Right lobe of liver (tissue), 6 donors: ENCODE measurements at regions of chr3 and their contacts with region 1.

Region 1: DNA sequence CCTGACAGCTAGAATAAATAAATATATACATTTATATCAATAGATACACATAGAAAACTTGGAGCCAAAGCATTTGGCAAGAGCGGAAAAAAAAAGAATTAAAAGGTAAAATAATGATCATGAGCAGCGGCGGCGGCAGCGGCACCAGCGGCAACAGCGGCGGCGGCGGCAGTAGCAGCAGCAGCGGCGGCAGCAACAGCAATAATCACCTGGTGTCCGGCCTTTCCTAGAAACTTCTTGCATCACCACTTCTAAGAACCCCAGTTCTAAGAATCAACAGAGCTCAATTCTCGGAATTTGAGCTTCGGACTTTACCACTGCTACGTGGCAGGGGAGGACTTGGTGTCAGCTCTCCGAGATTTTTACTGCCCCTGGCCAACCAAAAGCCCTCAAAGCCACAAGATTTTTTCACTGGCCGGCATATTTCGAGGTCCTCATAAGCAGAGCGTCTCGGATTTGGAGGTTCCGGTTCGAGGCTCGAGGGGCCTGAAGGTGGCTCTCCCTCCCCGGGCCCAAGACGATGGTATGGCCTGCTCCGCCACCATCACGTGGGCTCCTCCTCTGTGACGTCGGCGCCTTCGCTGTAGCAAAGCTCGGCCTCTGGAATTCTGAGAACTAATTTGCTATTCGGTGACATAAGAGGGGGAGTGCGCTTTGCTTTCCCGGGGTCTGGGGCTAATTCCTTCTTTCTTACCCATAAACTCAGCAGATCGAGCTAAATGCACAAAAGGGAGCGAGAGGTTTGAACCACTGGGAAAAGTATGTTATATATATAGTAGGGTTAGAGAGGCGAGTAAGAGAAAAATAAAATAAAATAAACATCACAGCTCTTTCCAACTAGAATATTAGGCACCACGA is at the start of gene BCL6:
- DNase-seq: peak; percentile 93 to 94 (median 94)
- ATAC-seq: peak; percentile 52 to 73 (median 67)
- H3K4me3 ChIP-seq: peak within 1 kb of the TSS; percentile 67 to 73 (median 67)
- H3K27ac ChIP-seq: peak within 1 kb of the TSS; percentile 99 to 100 (median 99)
- H3K4me1 ChIP-seq: peaks cover 0 to 35% (median 9%) of the 10 kb centered on the region in 4 donors
- H3K27me3 ChIP-seq: no peaks in the 10 kb centered on the region
- CTCF ChIP-seq: peak in 1 of 4 donors; percentile 13
- POLR2A ChIP-seq: peak; percentile 97
- total RNA-seq, gene BCL6: 29.1 to 67.5 (median 41.8) TPM

Region 2: DNA sequence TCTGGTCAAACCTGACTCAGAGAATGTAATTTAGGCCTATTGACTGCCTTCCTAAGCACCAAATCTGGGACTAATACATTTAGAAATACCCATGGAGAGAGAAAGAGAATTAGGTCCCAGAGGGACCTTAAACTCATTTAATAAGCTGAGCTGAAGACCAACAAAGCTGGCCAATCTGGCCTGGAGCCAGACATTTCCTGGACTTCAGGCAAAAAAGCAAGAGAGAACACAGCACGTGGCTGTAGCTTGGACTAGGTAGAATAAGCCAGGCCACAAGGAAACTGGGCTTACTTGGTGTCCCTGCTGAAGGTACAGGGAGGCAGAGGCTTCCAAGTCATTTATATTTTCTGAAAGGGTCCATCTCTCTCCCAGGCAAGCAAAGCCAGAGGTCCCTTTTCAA is 289.2 kb before region 1 on chr3:
- intact Hi-C with region 1: no loop called
- DNase-seq: peak in 1 of 3 donors; percentile 17
- ATAC-seq: no peak
- H3K4me3 ChIP-seq: no peak overlapping the region
- H3K27ac ChIP-seq: no peak overlapping the region
- H3K4me1 ChIP-seq: no peaks in the 10 kb centered on the region
- H3K27me3 ChIP-seq: no peaks in the 10 kb centered on the region
- CTCF ChIP-seq: no peak
- POLR2A ChIP-seq: no peak

Region 3: GRCh38 chr3:187935623-187936156 is 190.3 kb after region 1 on chr3:
- intact Hi-C with region 1: no loop called
- DNase-seq: no peak
- ATAC-seq: peak; percentile 39 to 69 (median 48)
- H3K4me3 ChIP-seq: no peak overlapping the region
- H3K27ac ChIP-seq: no peak overlapping the region
- H3K4me1 ChIP-seq: peaks cover 0 to 13% (median under 1%) of the 10 kb centered on the region in 4 donors
- H3K27me3 ChIP-seq: no peaks in the 10 kb centered on the region
- CTCF ChIP-seq: no peak
- POLR2A ChIP-seq: no peak

Region 4: GRCh38 chr3:188947401-188948280 is 1202.2 kb after region 1 on chr3:
- intact Hi-C with region 1: loop called in 1 of 2 experiments (anchors 10 kb)
- DNase-seq: peak; percentile 89 to 98 (median 93)
- ATAC-seq: peak; percentile 72 to 90 (median 78)
- H3K4me3 ChIP-seq: peak overlapping the region; percentile 64 to 75 (median 65)
- H3K27ac ChIP-seq: peak overlapping the region; percentile 78 to 98 (median 97)
- H3K4me1 ChIP-seq: peaks cover 0 to 49% (median 11%) of the 10 kb centered on the region in 4 donors
- H3K27me3 ChIP-seq: no peaks in the 10 kb centered on the region
- CTCF ChIP-seq: peak; percentile 10 to 44 (median 26)
- POLR2A ChIP-seq: peak; percentile 93

Region 5: GRCh38 chr3:189157232-189158007 is 1412.0 kb after region 1 on chr3:
- intact Hi-C with region 1: loop called in 1 of 2 experiments (anchors 10 kb)
- DNase-seq: no peak
- ATAC-seq: no peak
- H3K4me3 ChIP-seq: no peak overlapping the region
- H3K27ac ChIP-seq: no peak overlapping the region
- H3K4me1 ChIP-seq: no peaks in the 10 kb centered on the region
- H3K27me3 ChIP-seq: no peaks in the 10 kb centered on the region
- CTCF ChIP-seq: no peak
- POLR2A ChIP-seq: no peak